MCF 10A (cell line): ENCODE measurements at regions of chr4 and their contacts with region 1.

Region 1: DNA sequence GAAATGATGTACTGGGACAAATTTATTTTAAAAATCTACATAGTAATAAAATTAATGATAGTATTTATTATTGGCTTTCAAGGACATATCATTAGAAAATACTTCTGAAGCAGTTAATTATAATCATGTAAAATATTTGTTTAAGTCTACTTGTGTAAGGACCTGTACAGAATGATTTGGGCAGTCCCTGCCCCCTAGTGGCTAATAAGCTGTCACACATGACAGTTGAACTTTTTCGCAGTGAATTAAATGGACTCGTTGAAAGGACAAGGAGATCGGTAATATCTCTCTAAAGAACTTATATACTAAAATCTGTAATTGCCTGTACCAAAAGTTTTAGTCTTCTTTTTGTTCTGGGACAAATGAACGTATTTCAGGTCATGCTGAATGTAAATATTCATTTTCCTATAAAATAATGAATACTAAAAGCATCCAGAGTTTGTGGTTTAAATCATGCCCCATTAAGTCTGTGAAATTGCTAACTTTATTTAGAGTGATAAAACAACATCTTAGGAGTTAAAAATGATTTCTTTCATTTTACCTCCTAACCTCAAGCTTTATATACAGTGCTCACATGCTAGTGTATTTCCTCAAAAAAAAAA is 13.6 kb downstream of the EXOC1 start:
- DNase-seq: peak; percentile 76
- H3K4me3 Mint-ChIP-seq: no peak overlapping the region
- H3K27ac Mint-ChIP-seq: no peak overlapping the region
- H3K4me1 Mint-ChIP-seq: peaks cover 22% of the 10 kb centered on the region
- H3K27me3 Mint-ChIP-seq: no peaks in the 10 kb centered on the region
- CTCF ChIP-seq: peak; percentile 73

Region 2: GRCh38 chr4:54999003-54999402 is 868.1 kb before region 1 on chr4:
- CTCF ChIA-PET with region 1: interaction called, 10 read pairs
- POLR2A ChIA-PET with region 1: no interaction called
- intact Hi-C with region 1: no loop called
- DNase-seq: peak; percentile 47
- H3K4me3 Mint-ChIP-seq: no peak overlapping the region
- H3K27ac Mint-ChIP-seq: no peak overlapping the region
- H3K4me1 Mint-ChIP-seq: peaks cover 26% of the 10 kb centered on the region
- H3K27me3 Mint-ChIP-seq: no peaks in the 10 kb centered on the region
- CTCF ChIP-seq: peak; percentile 47

Region 3: GRCh38 chr4:55444827-55445226 is 422.2 kb before region 1 on chr4:
- CTCF ChIA-PET with region 1: interaction called, 30 read pairs
- POLR2A ChIA-PET with region 1: interaction called, 4 read pairs
- intact Hi-C with region 1: loop called (anchors 2 kb)
- DNase-seq: peak; percentile 43
- H3K4me3 Mint-ChIP-seq: no peak overlapping the region
- H3K27ac Mint-ChIP-seq: no peak overlapping the region
- H3K4me1 Mint-ChIP-seq: peaks cover 6% of the 10 kb centered on the region
- H3K27me3 Mint-ChIP-seq: no peaks in the 10 kb centered on the region
- CTCF ChIP-seq: peak; percentile 55

Region 4: GRCh38 chr4:55609393-55609866 is 257.6 kb before region 1 on chr4:
- CTCF ChIA-PET with region 1: interaction called, 4 read pairs
- POLR2A ChIA-PET with region 1: interaction called, 8 read pairs
- intact Hi-C with region 1: loop called (anchors 1 kb)
- DNase-seq: peak; percentile 94
- H3K4me3 Mint-ChIP-seq: peak overlapping the region; percentile 70
- H3K27ac Mint-ChIP-seq: peak overlapping the region; percentile 97
- H3K4me1 Mint-ChIP-seq: peaks cover 25% of the 10 kb centered on the region
- H3K27me3 Mint-ChIP-seq: no peaks in the 10 kb centered on the region
- CTCF ChIP-seq: no peak

Region 5: DNA sequence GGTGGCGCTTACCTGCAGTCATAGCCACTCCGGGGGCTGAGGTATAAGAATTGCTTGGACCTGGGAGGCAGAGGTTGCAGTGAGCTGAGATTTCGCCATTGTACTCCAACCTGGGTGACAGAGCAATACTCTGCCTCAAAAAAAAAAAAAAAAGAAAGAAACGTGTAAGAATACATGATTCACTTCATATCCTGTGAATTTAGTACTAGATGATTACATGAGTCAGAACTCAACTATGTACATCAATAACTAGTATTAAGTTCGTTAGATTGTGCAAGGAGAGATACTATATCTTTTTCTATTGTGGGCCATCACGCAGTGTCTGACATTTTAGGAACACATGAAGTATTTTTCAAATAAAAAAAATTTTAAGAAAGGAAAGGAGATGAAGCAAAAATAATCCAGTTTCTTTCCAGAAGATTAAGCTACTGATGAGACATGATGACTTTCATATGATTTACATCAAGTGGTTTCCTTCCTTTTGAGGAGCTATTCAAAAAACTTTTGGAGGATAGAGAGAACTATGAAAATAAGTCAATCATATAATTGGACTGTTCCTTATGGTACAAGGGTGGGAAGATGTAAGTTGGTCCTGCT is 112.2 kb before region 1 on chr4:
- CTCF ChIA-PET with region 1: interaction called, 3 read pairs
- POLR2A ChIA-PET with region 1: interaction called, 19 read pairs
- intact Hi-C with region 1: loop called (anchors 5 kb)
- DNase-seq: peak; percentile 64
- H3K4me3 Mint-ChIP-seq: no peak overlapping the region
- H3K27ac Mint-ChIP-seq: peak overlapping the region; percentile 70
- H3K4me1 Mint-ChIP-seq: peaks cover 26% of the 10 kb centered on the region
- H3K27me3 Mint-ChIP-seq: no peaks in the 10 kb centered on the region
- CTCF ChIP-seq: no peak

Region 6: DNA sequence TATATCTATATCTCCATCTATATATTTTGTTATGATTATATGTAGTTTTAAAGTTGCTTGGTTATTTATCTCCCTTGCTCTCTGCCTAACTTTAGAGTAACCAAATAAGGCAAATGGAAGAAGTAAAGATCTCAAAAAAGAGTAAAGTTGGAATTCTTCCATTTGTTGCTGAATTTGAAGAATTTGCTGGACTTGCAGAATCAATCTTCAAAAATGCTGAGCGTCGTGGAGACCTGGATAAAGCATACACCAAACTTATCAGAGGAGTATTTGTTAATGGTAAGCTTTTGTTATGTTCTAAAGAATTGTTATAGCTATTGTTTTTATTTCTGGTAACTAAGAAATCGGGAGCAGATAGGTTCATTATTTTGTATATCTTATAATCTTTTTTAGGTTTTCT is 29.5 kb after region 1 on chr4:
- CTCF ChIA-PET with region 1: interaction called, 11 read pairs
- POLR2A ChIA-PET with region 1: interaction called, 3 read pairs
- intact Hi-C with region 1: no loop called
- DNase-seq: no peak
- H3K4me3 Mint-ChIP-seq: no peak overlapping the region
- H3K27ac Mint-ChIP-seq: no peak overlapping the region
- H3K4me1 Mint-ChIP-seq: no peaks in the 10 kb centered on the region
- H3K27me3 Mint-ChIP-seq: no peaks in the 10 kb centered on the region
- CTCF ChIP-seq: no peak